Activated CD4-positive, alpha-beta T cell treated with anti-CD3 and anti-CD28 coated beads, Interleukin-2, amount 10 ng/mL, durations not matched to agents 7 days and 5 days (primary cell): ENCODE measurements at regions of chr11 and their contacts with region 1.

Region 1: GRCh38 chr11:67317205-67317887 is 14.0 kb downstream of the SSH3 start:
- DNase-seq: peak; percentile 99
- H3K4me3 Mint-ChIP-seq: peak overlapping the region; percentile 95
- H3K27ac Mint-ChIP-seq: peak overlapping the region; percentile 99
- H3K4me1 Mint-ChIP-seq: peaks cover 44% of the 10 kb centered on the region
- H3K27me3 Mint-ChIP-seq: peaks cover 3% of the 10 kb centered on the region

Region 2: GRCh38 chr11:67265633-67266423 is 51.5 kb before region 1 on chr11:
- CTCF ChIA-PET with region 1: interaction called, 72 read pairs
- POLR2A ChIA-PET with region 1: interaction called, 5 read pairs
- DNase-seq: peak; percentile 70
- H3K4me3 Mint-ChIP-seq: peak overlapping the region; percentile 76
- H3K27ac Mint-ChIP-seq: peak overlapping the region; percentile 77
- H3K4me1 Mint-ChIP-seq: peaks cover 61% of the 10 kb centered on the region
- H3K27me3 Mint-ChIP-seq: no peaks in the 10 kb centered on the region

Region 3: DNA sequence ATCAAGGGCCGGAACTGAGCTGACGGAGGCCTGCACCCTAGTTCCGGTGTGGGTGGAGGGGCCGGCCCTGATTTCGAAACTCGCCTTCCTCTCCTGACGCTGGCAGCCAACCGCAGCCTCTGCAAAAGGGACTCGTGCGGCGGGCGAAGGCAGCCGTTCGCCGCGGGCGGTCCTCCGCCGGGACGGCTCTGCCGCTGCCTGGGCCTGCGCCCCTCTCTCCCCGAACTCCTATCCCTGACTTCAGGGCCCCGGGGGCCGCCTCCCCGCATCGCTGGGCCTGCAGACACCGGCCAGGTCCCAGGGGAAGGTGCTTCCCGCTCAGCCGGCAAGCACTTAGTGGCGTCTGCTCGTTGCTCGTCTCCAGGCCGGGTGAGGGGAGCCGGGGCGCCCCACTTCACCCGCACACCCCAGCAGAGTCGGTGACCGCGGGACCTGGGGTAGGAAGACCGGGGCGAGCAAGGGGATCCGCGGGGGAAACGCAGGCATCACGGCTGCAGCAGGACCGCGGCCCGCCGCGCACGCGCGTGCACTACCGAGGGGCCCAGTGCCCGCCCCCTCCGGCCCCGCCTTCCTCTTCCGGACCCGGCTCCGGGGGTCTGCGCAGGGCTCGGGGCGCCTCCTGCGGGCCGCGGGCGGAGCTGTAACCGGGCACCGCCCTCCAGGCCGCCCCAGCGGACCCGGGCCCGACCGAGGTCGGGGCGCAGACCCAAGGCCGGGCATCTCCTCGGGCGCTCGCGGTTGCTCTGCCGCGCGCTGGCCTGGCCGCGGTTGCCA is 28.7 kb before region 1 on chr11:
- CTCF ChIA-PET with region 1: interaction called, 15 read pairs
- POLR2A ChIA-PET with region 1: no interaction called
- DNase-seq: peak; percentile 92
- H3K4me3 Mint-ChIP-seq: peak overlapping the region; percentile 73
- H3K27ac Mint-ChIP-seq: peak overlapping the region; percentile 98
- H3K4me1 Mint-ChIP-seq: peaks cover 72% of the 10 kb centered on the region
- H3K27me3 Mint-ChIP-seq: no peaks in the 10 kb centered on the region

Region 4: GRCh38 chr11:67345920-67346799 is 28.8 kb after region 1 on chr11:
- CTCF ChIA-PET with region 1: interaction called, 26 read pairs
- POLR2A ChIA-PET with region 1: no interaction called
- DNase-seq: peak; percentile 36
- H3K4me3 Mint-ChIP-seq: no peak overlapping the region
- H3K27ac Mint-ChIP-seq: peak overlapping the region; percentile 37
- H3K4me1 Mint-ChIP-seq: peaks cover 34% of the 10 kb centered on the region
- H3K27me3 Mint-ChIP-seq: no peaks in the 10 kb centered on the region

Region 5: GRCh38 chr11:68889948-68890446 is 1572.7 kb after region 1 on chr11:
- CTCF ChIA-PET with region 1: no interaction called
- POLR2A ChIA-PET with region 1: no interaction called
- DNase-seq: no peak
- H3K4me3 Mint-ChIP-seq: no peak overlapping the region
- H3K27ac Mint-ChIP-seq: no peak overlapping the region
- H3K4me1 Mint-ChIP-seq: no peaks in the 10 kb centered on the region
- H3K27me3 Mint-ChIP-seq: no peaks in the 10 kb centered on the region